ENCODE measurements at regions of chr14 and their contacts with region 1.

Region 1: GRCh38 chr14:104976198-104977007 is 1.8 kb downstream of the AHNAK2 start:
- DNase-seq: no peak
- H3K4me3 ChIP-seq: no peak overlapping the region
- CTCF ChIP-seq: peak; percentile 99

Region 2: GRCh38 chr14:104917993-104918392 is 58.4 kb before region 1 on chr14:
- CTCF ChIA-PET with region 1: no interaction called
- POLR2A ChIA-PET with region 1: no interaction called
- DNase-seq: no peak
- H3K4me3 ChIP-seq: no peak overlapping the region
- CTCF ChIP-seq: no peak

Region 3: DNA sequence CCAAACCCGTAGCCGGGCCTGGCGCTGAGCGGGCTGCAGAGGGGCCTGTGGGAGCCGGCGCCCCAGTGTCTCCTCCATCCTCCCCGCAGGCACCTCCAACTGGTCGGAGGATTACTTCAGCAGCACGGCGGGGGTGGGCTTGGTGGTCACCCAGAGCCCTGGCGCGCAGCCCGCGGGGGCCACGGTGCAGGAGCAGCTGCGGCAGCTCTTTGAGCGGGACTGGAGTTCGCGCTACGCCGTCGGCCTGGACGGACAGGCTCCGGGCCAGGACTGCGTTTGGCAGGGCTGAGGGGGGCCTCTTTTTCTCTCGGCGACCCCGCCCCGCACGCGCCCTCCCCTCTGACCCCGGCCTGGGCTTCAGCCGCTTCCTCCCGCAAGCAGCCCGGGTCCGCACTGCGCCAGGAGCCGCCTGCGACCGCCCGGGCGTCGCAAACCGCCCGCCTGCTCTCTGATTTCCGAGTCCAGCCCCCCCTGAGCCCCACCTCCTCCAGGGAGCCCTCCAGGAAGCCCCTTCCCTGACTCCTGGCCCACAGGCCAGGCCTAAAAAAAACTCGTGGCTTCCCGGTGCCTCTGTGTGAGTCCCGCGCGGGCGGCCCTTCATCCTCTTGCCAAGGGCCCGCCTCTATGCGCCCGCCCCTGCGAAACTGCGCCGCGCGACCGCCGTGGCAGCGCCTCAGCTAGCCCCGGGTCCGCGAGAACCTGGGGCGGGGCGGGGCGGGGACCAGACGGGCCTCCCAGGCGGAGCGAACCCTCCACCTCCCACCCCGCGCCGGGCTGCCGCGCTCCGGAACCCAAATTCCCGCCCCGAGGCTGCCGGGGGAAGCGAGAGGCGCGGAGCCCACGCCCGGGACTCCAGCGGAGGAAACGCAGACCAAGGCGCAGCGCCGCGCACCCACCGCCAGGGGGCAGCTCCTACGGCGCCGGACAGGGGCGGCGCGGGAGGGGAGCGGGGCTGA is 43.4 kb before region 1 on chr14:
- CTCF ChIA-PET with region 1: interaction called, 14 read pairs
- POLR2A ChIA-PET with region 1: interaction called, 5 read pairs
- DNase-seq: peak; percentile 10
- H3K4me3 ChIP-seq: peak overlapping the region; percentile 50
- CTCF ChIP-seq: peak; percentile 92

Region 4: GRCh38 chr14:104998801-104999200 is 22.4 kb after region 1 on chr14:
- CTCF ChIA-PET with region 1: interaction called, 14 read pairs
- POLR2A ChIA-PET with region 1: interaction called, 4 read pairs
- DNase-seq: no peak
- H3K4me3 ChIP-seq: no peak overlapping the region
- CTCF ChIP-seq: no peak

Region 5: DNA sequence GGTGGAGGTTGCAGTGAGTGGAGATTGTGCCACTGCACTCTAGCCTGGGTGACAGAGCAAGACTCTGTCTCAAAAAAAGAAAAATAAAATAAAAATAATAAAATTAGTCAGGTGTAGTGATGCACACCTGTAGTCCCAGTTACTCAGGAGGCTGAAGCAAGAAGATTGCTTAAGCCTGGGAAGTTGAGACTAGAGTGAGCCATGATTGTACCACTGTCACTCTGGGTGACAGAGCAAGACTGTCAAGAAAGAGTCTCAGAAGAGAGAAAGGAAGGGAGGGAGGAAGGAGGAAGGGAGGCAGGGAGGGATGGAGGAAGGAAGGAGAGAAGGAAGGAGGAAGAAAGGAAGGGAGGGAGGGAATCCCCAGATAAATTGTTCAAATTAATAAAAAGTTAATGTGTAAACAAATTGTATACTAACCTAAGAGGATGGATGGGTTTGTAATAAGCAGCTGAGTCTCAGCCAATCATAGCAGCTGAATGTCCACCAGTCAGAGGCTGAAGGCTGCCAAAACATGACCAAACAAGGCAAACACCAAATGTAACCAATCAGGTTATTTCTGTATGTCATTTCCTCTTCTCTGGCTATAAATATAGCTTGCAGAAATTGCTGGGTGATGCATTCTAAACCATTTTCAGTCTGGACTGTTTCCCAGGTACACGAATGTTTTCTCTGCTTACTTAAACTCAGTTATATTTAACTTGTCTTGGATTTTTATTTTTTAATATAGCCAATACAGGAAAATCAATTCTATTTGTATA is 50.6 kb after region 1 on chr14:
- CTCF ChIA-PET with region 1: interaction called, 57 read pairs
- POLR2A ChIA-PET with region 1: no interaction called
- DNase-seq: no peak
- H3K4me3 ChIP-seq: no peak overlapping the region
- CTCF ChIP-seq: no peak

Region 6: DNA sequence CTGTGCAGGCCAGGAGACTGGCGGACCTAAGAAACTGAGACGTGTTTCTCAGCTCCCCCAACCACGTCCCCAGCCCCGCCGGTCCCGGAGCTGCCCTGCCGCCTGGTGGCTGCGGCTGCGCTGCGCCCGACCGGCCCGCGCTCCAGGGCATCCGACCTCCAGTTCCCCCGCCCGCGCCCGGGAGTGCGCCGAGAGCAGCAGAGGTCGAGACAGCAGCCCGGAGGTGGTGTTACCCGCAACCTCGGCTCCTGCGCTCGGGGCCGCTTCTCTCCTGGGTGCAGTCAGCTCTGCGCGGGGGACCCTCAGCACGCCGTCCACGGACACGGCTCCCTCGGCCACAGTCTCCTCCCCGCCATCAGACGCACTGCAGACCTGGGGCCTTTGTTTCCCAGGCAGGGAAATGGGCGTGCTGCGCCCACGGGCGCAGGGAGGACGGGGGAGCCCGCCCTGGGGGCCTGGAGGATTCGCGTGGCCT is 110.5 kb after region 1 on chr14:
- CTCF ChIA-PET with region 1: interaction called, 49 read pairs
- POLR2A ChIA-PET with region 1: interaction called, 3 read pairs
- DNase-seq: no peak
- H3K4me3 ChIP-seq: peak overlapping the region; percentile 67
- CTCF ChIP-seq: peak; percentile 82

Region 7: GRCh38 chr14:105374383-105374782 is 398.0 kb after region 1 on chr14:
- CTCF ChIA-PET with region 1: no interaction called
- POLR2A ChIA-PET with region 1: no interaction called
- DNase-seq: no peak
- H3K4me3 ChIP-seq: no peak overlapping the region
- CTCF ChIP-seq: no peak